Activated naive CD8-positive, alpha-beta T cell treated with anti-CD3 and anti-CD28 coated beads, Interleukin-2, amount 10 ng/mL, durations not matched to agents 7 days and 5 days (primary cell): ENCODE measurements at regions of chr14 and their contacts with region 1.

Region 1: GRCh38 chr14:93970549-93970946 is 5.8 kb downstream of the ASB2 start:
- DNase-seq: peak; percentile 61
- ATAC-seq: peak; percentile 76
- H3K4me3 Mint-ChIP-seq: peak overlapping the region; percentile 93
- H3K27ac Mint-ChIP-seq: peak overlapping the region; percentile 99
- H3K4me1 Mint-ChIP-seq: peaks cover 53% of the 10 kb centered on the region
- H3K27me3 Mint-ChIP-seq: no peaks in the 10 kb centered on the region

Region 2: GRCh38 chr14:93892923-93893558 is 77.5 kb before region 1 on chr14:
- POLR2A ChIA-PET with region 1: no interaction called
- DNase-seq: peak; percentile 83
- ATAC-seq: peak; percentile 85
- H3K4me3 Mint-ChIP-seq: no peak overlapping the region
- H3K27ac Mint-ChIP-seq: no peak overlapping the region
- H3K4me1 Mint-ChIP-seq: no peaks in the 10 kb centered on the region
- H3K27me3 Mint-ChIP-seq: peaks cover 8% of the 10 kb centered on the region

Region 3: DNA sequence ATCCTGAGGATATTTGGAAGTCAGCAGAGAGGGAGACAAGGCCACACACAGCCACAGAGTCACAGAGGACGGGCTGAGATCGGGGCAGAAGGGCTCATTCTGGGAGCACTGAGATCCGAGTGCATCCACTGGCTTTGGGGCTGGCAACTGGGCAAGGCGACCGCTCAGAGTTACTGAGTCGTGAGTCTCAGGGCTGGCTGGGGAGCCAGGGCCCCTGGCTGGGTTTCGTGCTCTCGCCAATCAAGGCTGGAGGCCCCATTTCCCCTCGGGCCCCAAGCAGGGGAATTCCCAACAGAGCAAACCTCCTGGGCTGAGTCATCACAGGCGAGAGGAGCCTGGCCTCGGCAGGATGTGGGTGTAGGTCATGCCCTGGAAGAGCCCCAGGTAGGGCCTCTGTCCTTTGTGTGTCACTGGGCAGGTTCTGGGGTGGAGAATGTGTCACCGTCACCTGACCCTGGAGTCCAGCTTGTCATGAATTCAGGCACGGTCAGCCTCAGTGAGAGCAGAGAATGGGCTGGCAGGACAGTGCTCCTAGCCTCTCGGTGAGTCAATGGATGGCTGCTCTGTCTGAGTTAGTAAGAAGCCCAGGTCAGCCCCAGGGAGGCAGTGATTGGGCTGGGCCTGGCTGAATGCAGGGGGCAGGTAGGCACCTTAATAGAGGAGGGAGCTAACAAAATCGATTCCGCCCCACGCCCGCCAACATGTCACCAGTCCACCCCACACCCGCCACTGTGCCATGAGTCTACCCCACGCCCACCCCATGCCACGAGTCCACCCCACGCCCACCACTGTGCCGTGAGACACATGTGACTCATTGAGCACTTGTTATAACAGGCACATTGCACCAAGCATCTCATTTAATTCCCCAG is 11.1 kb before region 1 on chr14:
- POLR2A ChIA-PET with region 1: interaction called, 190 read pairs
- DNase-seq: peak; percentile 84
- ATAC-seq: peak; percentile 78
- H3K4me3 Mint-ChIP-seq: peak overlapping the region; percentile 74
- H3K27ac Mint-ChIP-seq: peak overlapping the region; percentile 91
- H3K4me1 Mint-ChIP-seq: peaks cover 85% of the 10 kb centered on the region
- H3K27me3 Mint-ChIP-seq: no peaks in the 10 kb centered on the region